Heart right ventricle (tissue), 16 donors: ENCODE measurements at regions of chr3 and their contacts with region 1.

Region 1: GRCh38 chr3:179819379-179819778 is 166.5 kb downstream of the USP13 start:
- DNase-seq: peak; percentile 33 to 60
- ATAC-seq: peak in 7 of 8 donors; percentile 42 to 93 (median 90)
- H3K4me3 ChIP-seq: no peak overlapping the region
- H3K27ac ChIP-seq: no peak overlapping the region
- H3K4me1 ChIP-seq: peaks cover 0 to 13% (median 3%) of the 10 kb centered on the region in 9 donors
- H3K27me3 ChIP-seq: peaks cover 0 to 9% (median 0%) of the 10 kb centered on the region in 7 donors
- CTCF ChIP-seq: no peak

Region 2: GRCh38 chr3:179768080-179768479 is 51.3 kb before region 1 on chr3:
- intact Hi-C with region 1: no loop called
- DNase-seq: no peak
- ATAC-seq: no peak
- H3K4me3 ChIP-seq: no peak overlapping the region
- H3K27ac ChIP-seq: no peak overlapping the region
- H3K4me1 ChIP-seq: peaks cover 0 to 11% (median 0%) of the 10 kb centered on the region in 9 donors
- H3K27me3 ChIP-seq: no peaks in the 10 kb centered on the region
- CTCF ChIP-seq: peak in 7 of 9 donors; percentile 12 to 42 (median 26)

Region 3: DNA sequence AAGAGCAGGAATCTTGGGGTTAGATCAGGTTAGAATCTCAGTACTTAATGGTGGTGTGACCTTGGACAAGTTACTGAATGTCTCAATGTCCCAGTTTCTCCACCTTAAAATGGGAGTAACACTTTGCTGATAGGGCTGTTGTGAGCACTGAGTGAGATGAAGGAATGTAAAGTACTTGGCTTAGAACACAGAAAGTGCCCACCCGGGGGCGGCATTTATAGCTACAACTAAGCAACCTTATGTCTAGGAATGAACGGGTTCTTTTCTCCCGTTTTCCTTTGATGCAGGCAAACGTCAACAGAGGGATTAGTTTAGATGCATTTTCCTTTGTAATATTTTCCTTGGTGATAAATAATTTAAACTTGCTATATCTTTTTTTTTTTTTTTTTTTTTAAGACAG is 10.0 kb after region 1 on chr3:
- intact Hi-C with region 1: loop called in 1 of 10 experiments (anchors 1 kb)
- DNase-seq: no peak
- ATAC-seq: no peak
- H3K4me3 ChIP-seq: no peak overlapping the region
- H3K27ac ChIP-seq: no peak overlapping the region
- H3K4me1 ChIP-seq: peaks cover 0 to 3% (median 0%) of the 10 kb centered on the region in 9 donors
- H3K27me3 ChIP-seq: no peaks in the 10 kb centered on the region
- CTCF ChIP-seq: no peak